ENCODE measurements at regions of chr4 and their contacts with region 1.

Region 1: GRCh38 chr4:23114538-23114937 is 421.8 kb downstream of the GBA3 start:
- DNase-seq: no peak
- H3K4me3 ChIP-seq: no peak overlapping the region
- CTCF ChIP-seq: no peak

Region 2: DNA sequence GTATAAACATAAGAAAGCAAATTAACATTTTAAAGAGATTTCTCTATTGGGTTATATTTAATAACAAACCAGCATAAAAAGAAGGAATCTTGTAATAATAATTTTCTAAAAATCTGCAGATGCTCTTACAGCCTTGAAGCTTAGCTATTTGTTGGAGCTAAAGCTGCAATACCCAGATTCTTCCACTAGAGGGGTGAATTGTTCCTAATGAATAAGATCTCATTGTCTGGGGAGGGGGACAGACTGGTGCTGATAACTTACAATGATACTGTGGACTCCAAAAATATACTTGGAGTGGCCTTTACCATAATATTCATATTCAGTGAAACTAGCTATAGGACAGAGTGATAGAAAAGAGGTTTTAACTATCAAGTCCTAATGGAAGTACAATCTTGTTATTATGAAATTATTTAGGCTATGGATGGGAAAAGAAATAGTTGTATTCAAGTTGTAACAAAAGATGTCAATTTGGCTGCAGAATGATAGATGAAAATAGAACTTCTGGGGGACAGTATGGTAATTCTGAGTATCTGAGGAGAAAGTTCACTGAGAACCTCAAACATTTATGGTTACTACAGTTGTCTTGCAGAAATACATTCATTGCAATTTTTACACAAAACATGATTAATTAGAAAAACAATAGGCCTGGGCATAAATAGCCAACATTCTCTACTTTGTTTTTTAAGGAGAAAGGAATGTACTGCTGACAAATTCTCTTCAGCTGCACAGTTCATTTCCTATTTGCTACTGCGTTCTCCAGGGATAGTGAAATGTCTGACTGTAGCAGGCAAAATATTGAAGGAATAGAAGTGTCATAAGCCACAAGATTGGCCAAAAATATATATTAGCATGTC is 21.5 kb after region 1 on chr4:
- CTCF ChIA-PET with region 1: interaction called, 11 read pairs
- POLR2A ChIA-PET with region 1: no interaction called
- DNase-seq: no peak
- H3K4me3 ChIP-seq: no peak overlapping the region
- CTCF ChIP-seq: peak; percentile 59